ENCODE measurements at regions of chr15 and their contacts with region 1.

Region 1: GRCh38 chr15:73873889-73874511 is 636 bp downstream of the TBC1D21 start:
- DNase-seq: no peak
- ATAC-seq: no peak

Region 2: DNA sequence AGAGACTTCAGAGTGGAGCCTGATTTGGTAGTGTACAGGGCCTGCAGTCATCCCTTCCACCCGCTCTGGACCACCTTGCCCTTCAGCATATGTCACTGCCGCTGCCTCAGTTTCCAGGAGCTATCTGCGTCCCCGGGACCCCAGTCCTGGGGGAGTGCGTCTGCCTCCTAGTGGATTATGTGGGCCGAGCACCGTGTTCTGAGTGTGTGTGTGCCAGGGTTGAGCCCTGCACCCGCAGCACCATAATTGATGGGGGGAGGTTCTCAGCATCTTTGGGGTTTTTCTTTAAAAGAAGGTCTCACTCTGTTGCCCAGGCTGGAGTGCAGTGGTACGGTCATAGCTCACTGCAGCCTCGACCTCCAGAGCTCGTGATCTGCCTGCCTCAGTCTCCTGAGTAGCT is 156.2 kb before region 1 on chr15:
- intact Hi-C with region 1: loop called (anchors 2 kb)
- DNase-seq: peak; percentile 43
- ATAC-seq: no peak

Region 3: GRCh38 chr15:73794443-73795133 is 79.4 kb before region 1 on chr15:
- intact Hi-C with region 1: loop called (anchors 5 kb)
- DNase-seq: no peak
- ATAC-seq: no peak

Region 4: DNA sequence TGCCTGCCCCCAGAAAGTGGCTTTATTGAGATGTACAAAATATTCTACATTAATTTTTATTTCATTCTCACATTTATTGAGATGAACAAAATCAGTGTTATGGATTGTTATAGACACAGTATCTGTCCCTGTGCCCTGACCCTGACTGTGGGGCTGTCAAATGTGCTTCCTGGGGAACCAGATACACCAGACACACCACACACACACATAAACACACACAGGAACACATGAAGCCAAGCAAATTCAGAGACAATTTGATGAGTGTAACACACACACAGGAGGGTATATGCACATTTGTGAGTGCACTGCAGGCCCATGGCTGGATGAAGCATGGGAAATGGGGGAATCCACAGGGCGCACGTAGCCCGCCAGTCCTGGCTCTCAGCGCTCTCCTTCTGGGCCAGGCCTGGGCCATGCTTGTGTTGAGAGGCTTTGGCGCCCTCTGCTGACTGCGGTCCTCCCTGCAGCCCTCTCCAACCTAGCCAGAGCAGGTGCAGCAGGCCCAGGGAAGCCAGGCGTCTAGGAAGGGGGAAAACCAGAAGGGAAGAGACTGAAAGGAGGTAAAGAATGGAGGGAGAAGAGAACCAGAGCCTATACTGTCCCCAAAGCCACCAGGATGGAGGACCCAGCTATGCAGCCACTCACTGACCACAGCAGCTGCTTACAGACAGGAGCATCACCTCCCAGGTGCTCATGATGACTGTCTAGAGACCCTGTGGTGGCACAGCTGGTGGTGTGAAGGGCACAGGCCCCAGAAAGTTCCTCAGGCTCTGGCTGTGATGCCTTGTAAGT is 34.2 kb after region 1 on chr15:
- intact Hi-C with region 1: loop called (anchors 2 kb)
- DNase-seq: peak; percentile 92
- ATAC-seq: peak; percentile 96

Region 5: GRCh38 chr15:73964736-73965093 is 90.7 kb after region 1 on chr15:
- intact Hi-C with region 1: loop called (anchors 2 kb)
- DNase-seq: peak; percentile 86
- ATAC-seq: peak; percentile 93